MCF 10A (cell line): ENCODE measurements at regions of chr15 and their contacts with region 1.

Region 1: GRCh38 chr15:90184786-90185569 is 16.2 kb upstream of the SEMA4B start:
- DNase-seq: peak; percentile 84
- H3K4me3 Mint-ChIP-seq: peak overlapping the region; percentile 88
- H3K27ac Mint-ChIP-seq: peak overlapping the region; percentile 89
- H3K4me1 Mint-ChIP-seq: peaks cover 22% of the 10 kb centered on the region
- H3K27me3 Mint-ChIP-seq: no peaks in the 10 kb centered on the region
- CTCF ChIP-seq: no peak

Region 2: GRCh38 chr15:90059208-90059985 is 125.6 kb before region 1 on chr15:
- CTCF ChIA-PET with region 1: no interaction called
- POLR2A ChIA-PET with region 1: no interaction called
- intact Hi-C with region 1: no loop called
- DNase-seq: peak; percentile 72
- H3K4me3 Mint-ChIP-seq: no peak overlapping the region
- H3K27ac Mint-ChIP-seq: peak overlapping the region; percentile 78
- H3K4me1 Mint-ChIP-seq: peaks cover 25% of the 10 kb centered on the region
- H3K27me3 Mint-ChIP-seq: no peaks in the 10 kb centered on the region
- CTCF ChIP-seq: no peak

Region 3: GRCh38 chr15:90201130-90201949 is 16.4 kb after region 1 on chr15 and contains the start of gene SEMA4B:
- CTCF ChIA-PET with region 1: interaction called, 5 read pairs
- POLR2A ChIA-PET with region 1: interaction called, 75 read pairs
- intact Hi-C with region 1: no loop called
- DNase-seq: peak; percentile 51
- H3K4me3 Mint-ChIP-seq: peak within 1 kb of the TSS; percentile 78
- H3K27ac Mint-ChIP-seq: no peak within 1 kb of the TSS
- H3K4me1 Mint-ChIP-seq: peaks cover 27% of the 10 kb centered on the region
- H3K27me3 Mint-ChIP-seq: no peaks in the 10 kb centered on the region
- CTCF ChIP-seq: no peak
- total RNA-seq, gene SEMA4B: 38.6 and 46.4 TPM in 2 replicates

Region 4: GRCh38 chr15:90352109-90352893 is 167.3 kb after region 1 on chr15 and contains the start of gene ZNF774:
- CTCF ChIA-PET with region 1: no interaction called
- POLR2A ChIA-PET with region 1: no interaction called
- intact Hi-C with region 1: no loop called
- DNase-seq: peak; percentile 96
- H3K4me3 Mint-ChIP-seq: peak within 1 kb of the TSS; percentile 80
- H3K27ac Mint-ChIP-seq: peak within 1 kb of the TSS; percentile 81
- H3K4me1 Mint-ChIP-seq: peaks cover 9% of the 10 kb centered on the region
- H3K27me3 Mint-ChIP-seq: no peaks in the 10 kb centered on the region
- CTCF ChIP-seq: no peak
- total RNA-seq, gene ZNF774: 2.6 and 4.8 TPM in 2 replicates